Lower lobe of right lung (tissue), 2 donors: ENCODE measurements at regions of chr10 and their contacts with region 1.

Region 1: GRCh38 chr10:11782793-11783557 is 40.2 kb upstream of the PROSER2 start:
- DNase-seq: no peak
- ATAC-seq: peak; percentile 56 to 75
- H3K4me3 ChIP-seq: no peak overlapping the region
- H3K27ac ChIP-seq: no peak overlapping the region
- H3K4me1 ChIP-seq: no peaks in the 10 kb centered on the region
- H3K27me3 ChIP-seq: no peaks in the 10 kb centered on the region
- CTCF ChIP-seq: peak; percentile 77

Region 2: DNA sequence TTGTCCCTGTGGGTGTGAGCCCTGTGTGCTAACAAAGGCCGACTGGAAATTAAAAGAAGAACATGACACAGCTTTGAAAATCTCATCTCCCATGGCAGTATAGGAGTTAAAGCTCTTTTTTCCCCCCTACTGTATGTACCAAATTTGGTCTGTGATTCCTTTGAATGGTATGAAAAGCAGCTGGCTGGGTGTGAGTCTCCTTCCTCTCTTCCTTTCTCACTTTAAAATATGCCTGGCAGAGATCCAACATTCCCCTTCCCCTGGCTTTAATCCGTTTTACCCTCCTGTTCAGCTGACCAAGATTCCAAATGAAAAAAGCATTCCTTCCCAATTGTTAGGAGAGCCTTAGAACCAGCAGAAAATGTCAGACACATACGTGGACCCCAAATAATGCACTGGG is 990.3 kb before region 1 on chr10:
- intact Hi-C with region 1: no loop called
- DNase-seq: no peak
- ATAC-seq: peak; percentile 11 to 22
- H3K4me3 ChIP-seq: peak overlapping the region; percentile 48
- H3K27ac ChIP-seq: peak overlapping the region; percentile 90
- H3K4me1 ChIP-seq: peaks cover 31% of the 10 kb centered on the region
- H3K27me3 ChIP-seq: no peaks in the 10 kb centered on the region
- CTCF ChIP-seq: no peak

Region 3: DNA sequence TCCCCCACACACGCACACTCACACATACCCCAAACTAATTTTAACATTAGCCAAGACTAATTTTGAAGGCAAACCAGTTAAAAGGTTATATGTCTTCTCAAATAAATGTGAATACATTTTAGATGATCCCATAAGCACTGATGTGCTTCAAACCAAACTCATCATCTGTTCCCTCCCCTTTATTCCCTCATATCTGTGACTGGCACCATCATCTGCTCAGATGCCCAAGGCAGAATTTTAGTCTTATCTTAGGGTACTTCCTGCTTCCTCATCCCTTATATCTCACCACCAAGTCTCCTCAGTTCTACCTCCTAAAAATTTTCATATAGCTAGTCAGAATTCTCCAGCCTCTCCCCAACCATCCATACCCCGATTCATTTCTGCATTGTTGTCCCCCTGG is 179.2 kb after region 1 on chr10:
- intact Hi-C with region 1: no loop called
- DNase-seq: no peak
- ATAC-seq: no peak
- H3K4me3 ChIP-seq: no peak overlapping the region
- H3K27ac ChIP-seq: no peak overlapping the region
- H3K4me1 ChIP-seq: no peaks in the 10 kb centered on the region
- H3K27me3 ChIP-seq: no peaks in the 10 kb centered on the region
- CTCF ChIP-seq: no peak

Region 4: GRCh38 chr10:11986593-11987216 is 203.7 kb after region 1 on chr10:
- intact Hi-C with region 1: loop called (anchors 10 kb)
- DNase-seq: peak; percentile 69
- ATAC-seq: peak; percentile 77 to 89
- H3K4me3 ChIP-seq: no peak overlapping the region
- H3K27ac ChIP-seq: no peak overlapping the region
- H3K4me1 ChIP-seq: peaks cover 4% of the 10 kb centered on the region
- H3K27me3 ChIP-seq: no peaks in the 10 kb centered on the region
- CTCF ChIP-seq: peak; percentile 81